Calu3 (cell line): ENCODE measurements at regions of chr16 and their contacts with region 1.

Region 1: DNA sequence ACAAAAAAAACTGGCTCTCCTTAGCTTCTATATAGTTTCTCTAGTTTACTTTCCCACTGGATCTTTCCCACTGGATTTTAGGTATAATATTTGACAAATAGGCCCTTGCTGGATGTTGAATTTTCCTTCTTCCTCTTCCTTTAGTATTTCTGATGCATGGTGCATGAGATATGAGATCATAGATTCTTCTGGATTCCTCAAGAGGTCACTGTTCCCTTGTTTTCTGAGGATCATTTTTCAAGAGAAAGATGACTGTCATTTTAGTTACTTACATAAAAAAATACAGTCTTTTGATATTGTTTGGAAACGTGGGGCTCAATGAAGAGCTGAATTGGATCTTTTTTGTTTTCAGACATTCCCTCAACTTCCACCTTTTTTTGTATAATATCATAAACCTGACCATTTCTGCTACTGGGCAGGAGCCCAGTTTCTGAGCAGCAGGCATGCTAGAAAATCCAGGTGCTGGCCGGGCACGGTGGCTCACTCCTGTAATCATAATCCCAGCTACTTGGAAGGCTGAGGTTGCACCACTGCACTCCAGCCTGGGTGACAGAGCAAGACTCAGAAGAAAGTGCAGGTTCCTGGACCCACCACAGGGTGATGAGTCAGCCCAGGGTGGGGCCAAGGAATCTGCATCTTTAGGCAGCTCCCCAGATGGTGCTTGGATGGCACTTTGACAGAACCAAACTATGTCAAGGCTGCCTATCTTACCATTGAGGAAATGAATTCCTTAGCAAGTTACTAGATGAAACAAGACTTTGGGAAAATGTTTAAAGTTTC is 70.3 kb downstream of the SDR42E1 start:
- DNase-seq: peak; percentile 58
- H3K4me3 Mint-ChIP-seq: no peak overlapping the region
- H3K27ac Mint-ChIP-seq: no peak overlapping the region
- H3K4me1 Mint-ChIP-seq: peaks cover 11% of the 10 kb centered on the region
- H3K27me3 Mint-ChIP-seq: peaks cover 31% of the 10 kb centered on the region
- CTCF ChIP-seq: peak; percentile 47

Region 2: DNA sequence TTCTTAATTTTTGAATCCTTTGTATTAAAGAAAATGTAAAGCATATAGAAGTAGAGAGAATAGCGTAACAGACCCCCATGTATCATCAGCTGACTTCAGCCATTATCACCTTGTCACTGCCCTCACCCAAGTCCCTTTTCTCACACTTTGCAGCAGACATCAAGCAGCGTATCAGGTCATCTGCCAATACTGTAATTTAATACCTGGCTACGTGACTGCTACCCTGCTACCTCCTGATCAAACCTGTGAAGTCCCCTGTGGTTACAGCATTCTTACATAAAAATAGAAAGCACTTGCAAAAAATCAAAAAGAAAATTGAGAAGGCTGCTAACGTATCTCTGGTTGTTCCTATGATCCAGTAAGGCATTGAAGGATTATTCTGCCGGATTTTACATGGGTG is 65.5 kb before region 1 on chr16:
- CTCF ChIA-PET with region 1: no interaction called
- intact Hi-C with region 1: no loop called
- DNase-seq: no peak
- H3K4me3 Mint-ChIP-seq: no peak overlapping the region
- H3K27ac Mint-ChIP-seq: no peak overlapping the region
- H3K4me1 Mint-ChIP-seq: no peaks in the 10 kb centered on the region
- H3K27me3 Mint-ChIP-seq: peaks cover 52% of the 10 kb centered on the region
- CTCF ChIP-seq: no peak

Region 3: DNA sequence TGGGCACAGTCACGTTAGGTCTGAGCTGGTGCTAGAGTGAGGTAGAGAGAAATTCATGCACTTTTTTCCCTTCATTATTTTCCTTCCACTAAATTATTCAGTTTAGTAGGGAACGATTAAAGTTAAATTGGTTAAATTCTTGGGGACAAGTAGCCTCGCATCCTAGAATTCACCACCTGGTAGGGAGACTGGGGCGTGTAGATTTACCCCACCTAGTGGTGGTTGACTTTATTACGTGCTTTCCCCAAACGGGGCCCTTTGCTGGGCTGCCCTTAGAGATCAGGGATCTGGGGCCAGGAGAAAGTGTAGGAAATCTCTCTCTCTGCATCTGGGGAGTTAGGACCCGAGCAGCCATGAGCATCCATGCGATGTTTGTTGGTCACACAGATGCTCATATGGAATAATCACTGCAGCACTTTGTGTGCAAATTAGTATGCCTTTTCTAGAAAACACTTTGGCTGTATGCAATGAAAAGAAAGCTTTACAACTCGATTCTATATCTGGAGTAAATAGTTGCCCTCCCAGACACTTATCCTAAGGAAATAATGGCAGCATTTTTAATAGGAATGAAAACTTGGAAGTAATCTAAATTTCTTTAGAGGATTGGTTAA is 54.9 kb before region 1 on chr16:
- CTCF ChIA-PET with region 1: no interaction called
- intact Hi-C with region 1: loop called (anchors 1 kb)
- DNase-seq: peak; percentile 75
- H3K4me3 Mint-ChIP-seq: no peak overlapping the region
- H3K27ac Mint-ChIP-seq: no peak overlapping the region
- H3K4me1 Mint-ChIP-seq: no peaks in the 10 kb centered on the region
- H3K27me3 Mint-ChIP-seq: peaks cover 72% of the 10 kb centered on the region
- CTCF ChIP-seq: peak; percentile 79

Region 4: DNA sequence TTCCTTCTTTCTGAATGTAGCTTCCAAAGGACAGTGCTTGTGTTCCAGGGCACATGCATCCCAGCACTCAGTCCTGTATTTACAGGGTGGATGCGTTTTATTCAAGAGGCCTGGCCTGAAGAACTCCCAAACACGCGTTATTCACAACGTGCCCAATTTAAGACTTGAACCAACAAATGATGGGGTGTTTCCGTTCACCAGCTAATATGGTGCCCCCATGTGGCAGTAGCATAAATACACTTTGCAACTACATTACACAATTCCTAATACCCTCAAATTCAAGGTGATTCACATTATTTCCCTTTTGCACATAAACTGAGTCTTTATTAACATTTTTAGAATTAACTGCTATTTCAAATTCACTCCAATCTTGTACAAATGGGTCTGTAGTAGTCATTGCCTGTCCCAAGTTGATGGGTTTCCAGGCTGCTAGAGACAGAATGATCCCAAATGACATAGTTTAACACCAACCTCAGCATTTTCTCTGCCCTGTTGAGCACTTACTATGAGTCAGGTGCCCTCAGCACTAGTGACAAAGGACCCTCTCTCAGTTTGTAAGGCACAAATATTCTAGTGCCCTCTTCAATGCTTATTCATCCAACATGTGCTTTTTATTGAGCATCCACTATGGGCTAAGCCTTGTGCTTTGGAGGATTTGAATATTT is 121.0 kb after region 1 on chr16:
- CTCF ChIA-PET with region 1: no interaction called
- intact Hi-C with region 1: loop called (anchors 1 kb)
- DNase-seq: peak; percentile 59
- H3K4me3 Mint-ChIP-seq: no peak overlapping the region
- H3K27ac Mint-ChIP-seq: peak overlapping the region; percentile 15
- H3K4me1 Mint-ChIP-seq: peaks cover 29% of the 10 kb centered on the region
- H3K27me3 Mint-ChIP-seq: no peaks in the 10 kb centered on the region
- CTCF ChIP-seq: peak; percentile 68

Region 5: GRCh38 chr16:82229796-82230619 is 289.0 kb after region 1 on chr16:
- CTCF ChIA-PET with region 1: interaction called, 10 read pairs
- intact Hi-C with region 1: loop called (anchors 1 kb)
- DNase-seq: peak; percentile 90
- H3K4me3 Mint-ChIP-seq: no peak overlapping the region
- H3K27ac Mint-ChIP-seq: no peak overlapping the region
- H3K4me1 Mint-ChIP-seq: peaks cover 6% of the 10 kb centered on the region
- H3K27me3 Mint-ChIP-seq: peaks cover 68% of the 10 kb centered on the region
- CTCF ChIP-seq: peak; percentile 96

Region 6: DNA sequence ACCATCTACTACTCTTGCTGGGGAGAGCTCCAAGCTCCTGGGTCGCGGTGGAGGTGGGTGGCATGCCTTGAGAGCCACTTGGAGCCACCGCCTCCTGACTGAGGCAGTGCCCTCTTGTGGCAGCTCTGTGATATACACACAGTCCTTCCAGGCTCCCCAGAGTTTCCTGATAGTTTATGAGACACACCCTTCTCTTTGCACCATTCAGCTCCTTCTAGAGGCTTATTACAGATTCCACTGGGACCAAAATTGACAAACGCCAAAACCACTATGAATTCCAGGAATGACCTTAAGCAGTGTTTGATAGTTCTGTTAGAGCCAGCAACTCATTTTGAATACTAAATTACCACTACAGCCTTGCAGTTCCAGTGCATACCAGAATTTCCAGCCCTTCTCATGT is 515.7 kb after region 1 on chr16:
- CTCF ChIA-PET with region 1: interaction called, 3 read pairs
- intact Hi-C with region 1: loop called (anchors 2 kb)
- DNase-seq: peak; percentile 71
- H3K4me3 Mint-ChIP-seq: no peak overlapping the region
- H3K27ac Mint-ChIP-seq: no peak overlapping the region
- H3K4me1 Mint-ChIP-seq: no peaks in the 10 kb centered on the region
- H3K27me3 Mint-ChIP-seq: peaks cover 25% of the 10 kb centered on the region
- CTCF ChIP-seq: peak; percentile 63